Head of caudate nucleus (tissue), 42 donors: ENCODE measurements at regions of chr4 and their contacts with region 1.

Region 1: GRCh38 chr4:20305976-20306375 is 54.3 kb downstream of the SLIT2 start:
- DNase-seq: peak in 17 of 42 donors; percentile 13 to 82 (median 52)

Region 2: GRCh38 chr4:20428436-20429160 is 122.6 kb after region 1 on chr4:
- intact Hi-C with region 1: loop called (anchors 5 kb)
- DNase-seq: peak in 1 of 42 donors; percentile 48

Region 3: DNA sequence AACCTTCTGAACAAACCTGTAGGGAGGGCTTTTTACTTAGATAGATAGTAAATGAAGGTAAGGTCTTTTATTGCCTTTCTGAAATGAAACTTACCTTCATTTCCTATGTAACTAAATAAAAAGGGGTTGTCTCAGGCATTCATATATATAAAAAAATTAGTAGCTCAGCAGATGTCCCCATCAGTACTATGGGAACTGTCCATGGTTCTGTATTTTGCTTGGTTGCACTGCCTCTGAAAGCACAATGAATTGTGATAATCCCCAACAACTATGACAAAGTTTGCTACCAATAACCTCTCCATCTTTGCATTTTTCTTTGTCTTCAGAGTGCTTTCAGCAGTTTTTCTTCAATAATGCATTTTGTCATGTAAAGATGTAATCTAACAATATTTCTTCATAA is 168.1 kb after region 1 on chr4:
- intact Hi-C with region 1: no loop called
- DNase-seq: no peak

Region 4: GRCh38 chr4:20506827-20507226 is 200.9 kb after region 1 on chr4:
- intact Hi-C with region 1: no loop called
- DNase-seq: no peak

Region 5: DNA sequence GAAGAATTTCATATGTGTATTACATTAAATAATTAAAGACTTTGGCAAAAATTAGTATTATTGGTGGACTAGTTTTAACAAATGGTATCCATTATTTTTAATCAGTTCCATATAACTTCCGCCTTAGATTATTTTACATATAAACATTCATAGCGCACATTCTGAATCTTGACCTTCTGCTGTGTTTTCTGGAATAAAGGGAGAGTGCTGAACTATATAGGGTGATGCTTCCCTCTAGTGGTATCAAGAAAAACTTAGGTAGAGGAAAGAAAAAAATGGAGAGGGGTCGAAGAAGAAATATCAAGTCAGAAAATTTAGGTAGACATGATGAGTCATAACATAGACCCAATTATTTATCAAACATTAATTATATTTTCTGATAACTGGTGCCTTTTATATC is 238.7 kb after region 1 on chr4:
- intact Hi-C with region 1: loop called (anchors 5 kb)
- DNase-seq: no peak

Region 6: DNA sequence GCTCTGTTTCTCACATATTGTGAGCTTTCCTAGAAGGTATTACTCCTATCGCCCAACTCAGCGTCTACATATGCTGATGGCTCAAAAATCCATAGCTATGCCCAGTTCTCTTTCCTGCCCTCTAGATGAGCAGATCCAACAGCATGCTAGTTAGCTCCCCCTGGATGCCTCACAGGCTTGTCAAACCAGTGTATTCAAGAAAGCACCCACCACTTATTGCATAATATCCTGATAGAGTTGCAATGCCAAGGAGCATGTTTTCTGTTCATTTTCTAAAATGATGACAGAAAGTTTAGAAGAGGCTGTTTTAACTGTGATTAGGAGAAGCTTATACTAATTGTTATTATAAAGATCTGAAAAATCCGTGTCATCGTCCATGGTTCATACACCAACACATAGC is 392.4 kb after region 1 on chr4:
- intact Hi-C with region 1: loop called (anchors 10 kb)
- DNase-seq: peak in 10 of 42 donors; percentile 7 to 49 (median 27)